ENCODE measurements at regions of chr9 and their contacts with region 1.

Region 1: GRCh38 chr9:73023025-73023541 is 70.2 kb upstream of the ALDH1A1 start:
- DNase-seq: no peak
- H3K4me3 ChIP-seq: no peak overlapping the region
- H3K27me3 ChIP-seq: no peaks in the 10 kb centered on the region
- CTCF ChIP-seq: peak; percentile 74

Region 2: DNA sequence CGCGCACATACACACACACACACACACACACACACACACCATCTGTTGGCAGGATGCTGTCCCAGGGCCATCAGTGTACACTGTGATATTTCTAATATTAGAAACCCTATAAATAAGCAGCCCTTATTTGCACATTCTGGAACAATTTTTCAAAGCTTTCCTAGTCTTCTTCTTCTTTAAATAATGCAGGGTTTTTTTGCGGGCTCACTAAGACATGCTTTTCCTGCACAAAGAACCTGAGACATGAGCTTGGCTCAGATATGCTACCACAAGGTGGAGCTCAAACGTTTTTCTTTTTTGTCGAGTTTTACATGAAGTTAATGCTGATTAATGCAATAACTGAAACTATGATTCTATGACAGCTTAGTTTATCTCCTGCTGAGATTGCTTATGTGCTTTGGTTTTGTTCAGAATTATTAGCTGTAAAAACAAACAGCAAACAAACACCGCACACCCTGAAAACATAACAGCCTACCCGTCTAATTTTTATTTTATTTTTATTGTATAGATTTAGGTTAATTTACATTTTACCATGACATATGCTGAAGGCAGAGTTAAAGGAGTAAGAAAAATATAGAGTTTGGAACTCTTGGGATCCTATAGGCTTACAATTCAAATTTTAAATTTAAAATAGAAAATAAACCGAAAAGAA is 166.0 kb before region 1 on chr9:
- CTCF ChIA-PET with region 1: interaction called, 16 read pairs
- POLR2A ChIA-PET with region 1: no interaction called
- DNase-seq: no peak
- H3K4me3 ChIP-seq: no peak overlapping the region
- H3K27me3 ChIP-seq: no peaks in the 10 kb centered on the region
- CTCF ChIP-seq: peak; percentile 71

Region 3: DNA sequence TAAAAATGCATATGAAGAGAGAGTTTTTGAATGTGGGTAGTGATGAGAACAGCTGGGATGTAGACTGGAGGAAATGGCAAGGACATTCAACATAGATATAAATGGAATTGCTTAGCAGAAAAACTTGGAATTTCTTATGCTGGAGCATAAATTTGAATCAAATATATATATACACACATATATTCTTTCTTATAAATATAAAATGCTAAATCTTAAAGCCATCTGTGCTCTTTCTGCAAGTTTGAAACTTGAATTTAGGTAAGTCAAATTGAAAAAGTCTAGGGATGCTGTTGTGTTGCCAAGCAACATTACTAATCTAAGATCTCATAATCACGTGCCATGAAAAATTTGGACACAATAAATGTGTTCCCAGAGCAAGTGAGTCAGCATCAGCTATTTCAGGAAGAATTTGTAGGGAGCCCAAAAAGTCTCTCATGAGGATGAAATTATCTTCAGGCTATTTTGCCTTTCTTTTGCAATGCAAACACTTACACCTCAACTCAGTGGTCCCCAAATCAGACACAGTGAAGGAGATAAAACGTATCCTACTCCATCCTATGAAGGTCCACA is 11.8 kb before region 1 on chr9:
- CTCF ChIA-PET with region 1: interaction called, 19 read pairs
- POLR2A ChIA-PET with region 1: interaction called, 3 read pairs
- DNase-seq: peak; percentile 91
- H3K4me3 ChIP-seq: no peak overlapping the region
- H3K27me3 ChIP-seq: no peaks in the 10 kb centered on the region
- CTCF ChIP-seq: no peak

Measured in BJ (cell line).